Activated CD8-positive, alpha-beta T cell treated with anti-CD3 and anti-CD28 coated beads for 36 hours (primary cell): ENCODE measurements at regions of chr4 and their contacts with region 1.

Region 1: GRCh38 chr4:1746265-1746691 is 25.0 kb downstream of the TACC3 start:
- DNase-seq: peak; percentile 92
- ATAC-seq: peak; percentile 78
- H3K4me3 Mint-ChIP-seq: no peak overlapping the region
- H3K27ac Mint-ChIP-seq: no peak overlapping the region
- H3K4me1 Mint-ChIP-seq: no peaks in the 10 kb centered on the region
- H3K27me3 Mint-ChIP-seq: peaks cover 4% of the 10 kb centered on the region
- CTCF ChIP-seq: peak; percentile 84

Region 2: DNA sequence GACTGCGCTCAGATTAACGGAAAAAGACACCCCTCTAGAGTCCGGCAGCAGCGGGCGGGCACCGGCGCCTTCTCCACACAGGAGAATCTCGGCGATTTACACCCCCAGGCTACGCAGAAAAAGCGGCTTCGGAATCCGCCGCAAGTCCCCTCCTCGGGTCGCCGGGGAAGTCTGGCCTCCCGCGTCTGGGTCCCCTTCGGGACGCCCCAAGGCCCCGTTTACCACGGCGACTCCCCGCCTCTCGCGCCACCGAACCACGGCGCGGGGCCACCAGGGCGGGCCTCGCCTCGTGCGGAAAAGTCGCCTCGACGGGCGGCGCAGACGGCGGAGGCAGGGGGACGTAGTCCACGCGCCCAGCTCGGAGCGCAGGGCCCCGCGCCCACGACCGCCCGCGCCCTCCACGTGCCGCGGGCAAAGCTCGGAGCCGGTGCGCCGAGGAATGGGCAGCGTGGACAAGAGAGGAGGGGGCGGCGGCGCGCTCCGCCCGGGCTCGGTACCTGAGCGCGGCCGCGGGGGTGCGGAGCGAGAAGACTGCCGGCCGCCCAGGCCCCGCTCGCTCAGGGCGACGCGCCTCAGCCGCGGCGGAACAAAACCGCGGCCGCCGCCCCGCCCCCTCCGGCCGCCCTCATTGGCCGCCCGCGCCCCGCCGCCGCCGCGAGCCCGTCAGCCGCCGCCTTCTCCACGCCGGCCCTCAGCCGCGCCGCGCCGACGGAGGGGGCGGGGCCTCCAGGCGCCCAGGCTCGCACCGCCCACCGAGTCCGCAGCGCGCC is 62.4 kb before region 1 on chr4 and contains the start of gene FAM53A:
- CTCF ChIA-PET with region 1: no interaction called
- POLR2A ChIA-PET with region 1: no interaction called
- intact Hi-C with region 1: no loop called
- DNase-seq: peak; percentile 42
- ATAC-seq: peak; percentile 96
- H3K4me3 Mint-ChIP-seq: peak within 1 kb of the TSS; percentile 76
- H3K27ac Mint-ChIP-seq: peak within 1 kb of the TSS; percentile 69
- H3K4me1 Mint-ChIP-seq: peaks cover 11% of the 10 kb centered on the region
- H3K27me3 Mint-ChIP-seq: no peaks in the 10 kb centered on the region
- CTCF ChIP-seq: no peak
- total RNA-seq, gene FAM53A: 1.2 to 1.8 TPM

Region 3: DNA sequence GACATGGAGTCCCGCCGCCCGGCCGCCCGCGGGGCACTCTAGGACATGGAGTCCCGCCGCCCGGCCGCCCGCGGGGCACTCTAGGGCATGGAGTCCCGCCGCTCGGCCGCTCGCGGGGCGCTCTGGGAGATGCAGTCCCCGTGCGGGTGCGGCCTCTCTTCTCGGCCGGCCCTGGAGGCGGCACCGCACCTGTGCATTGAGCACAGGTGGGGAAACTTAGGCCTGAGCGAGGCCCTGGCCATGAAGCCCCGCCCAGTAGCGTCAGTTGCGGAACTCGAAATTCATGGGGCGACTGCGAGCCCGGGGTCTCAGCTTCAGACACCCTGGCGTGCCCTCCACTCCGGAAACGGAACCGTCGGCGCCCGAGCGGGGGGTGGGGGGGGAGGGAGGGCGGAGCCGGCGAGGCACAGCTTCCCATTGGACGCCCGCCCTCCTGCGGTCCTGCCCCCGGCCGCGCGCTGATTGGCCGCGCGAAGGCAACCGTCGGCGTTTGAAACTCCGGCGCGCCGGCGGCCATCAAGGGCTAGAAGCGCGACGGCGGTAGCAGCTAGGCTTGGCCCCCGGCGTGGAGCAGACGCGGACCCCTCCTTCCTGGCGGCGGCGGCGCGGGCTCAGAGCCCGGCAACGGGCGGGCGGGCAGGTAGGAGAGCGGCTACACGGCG is 25.1 kb before region 1 on chr4 and contains the starts of genes TACC3 and TMEM129:
- CTCF ChIA-PET with region 1: interaction called, 11 read pairs
- POLR2A ChIA-PET with region 1: interaction called, 4 read pairs
- intact Hi-C with region 1: no loop called
- DNase-seq: peak; percentile 96
- ATAC-seq: peak; percentile 81
- H3K4me3 Mint-ChIP-seq: peak within 1 kb of the TSS; percentile 97
- H3K27ac Mint-ChIP-seq: peak within 1 kb of the TSS; percentile 99
- H3K4me1 Mint-ChIP-seq: peaks cover 40% of the 10 kb centered on the region
- H3K27me3 Mint-ChIP-seq: no peaks in the 10 kb centered on the region
- CTCF ChIP-seq: no peak
- total RNA-seq, gene TACC3: 190 to 200 TPM
- total RNA-seq, gene TMEM129: 17.8 to 18.2 TPM

Region 4: DNA sequence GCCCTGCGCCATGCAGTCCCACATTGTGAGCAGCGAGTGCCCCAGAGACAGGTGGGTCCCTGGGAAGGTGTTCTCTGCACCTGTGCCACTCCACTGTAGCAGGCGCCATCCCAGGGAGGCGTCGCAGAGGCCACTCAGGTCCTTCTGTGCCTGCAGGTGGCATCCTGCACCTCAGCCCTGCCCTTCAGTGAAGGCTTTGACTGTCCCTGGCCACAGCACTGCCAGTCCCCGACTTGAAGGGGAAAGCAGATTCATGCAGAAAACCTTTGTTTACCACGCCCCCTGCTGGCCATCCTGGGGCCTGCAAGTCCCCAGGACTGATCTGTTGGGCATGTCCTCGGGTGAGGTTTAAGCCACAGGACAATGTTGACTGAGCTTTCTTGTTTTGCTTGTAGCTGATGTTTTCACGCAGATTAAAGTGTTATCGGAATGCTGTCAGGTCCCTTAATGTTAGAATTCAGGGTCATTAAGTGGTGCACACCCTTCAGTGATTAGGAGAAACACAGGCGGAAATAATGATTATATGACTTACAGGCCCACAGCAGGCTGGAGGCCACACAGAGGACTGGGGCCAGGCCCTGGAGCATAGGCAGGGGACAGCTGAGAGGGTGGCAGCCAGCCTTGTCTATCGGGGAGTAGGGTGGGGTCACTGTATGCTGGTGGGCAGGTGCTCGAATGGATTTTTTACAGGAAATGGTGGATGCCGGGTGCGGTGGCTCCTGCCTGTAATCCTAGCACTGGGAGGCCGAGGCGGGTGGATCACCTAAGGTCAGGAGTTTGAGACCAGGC is 19.9 kb before region 1 on chr4:
- CTCF ChIA-PET with region 1: interaction called, 12 read pairs
- POLR2A ChIA-PET with region 1: interaction called, 4 read pairs
- intact Hi-C with region 1: no loop called
- DNase-seq: peak; percentile 95
- ATAC-seq: peak; percentile 29
- H3K4me3 Mint-ChIP-seq: no peak overlapping the region
- H3K27ac Mint-ChIP-seq: peak overlapping the region; percentile 73
- H3K4me1 Mint-ChIP-seq: peaks cover 58% of the 10 kb centered on the region
- H3K27me3 Mint-ChIP-seq: no peaks in the 10 kb centered on the region
- CTCF ChIP-seq: peak; percentile 95

Region 5: DNA sequence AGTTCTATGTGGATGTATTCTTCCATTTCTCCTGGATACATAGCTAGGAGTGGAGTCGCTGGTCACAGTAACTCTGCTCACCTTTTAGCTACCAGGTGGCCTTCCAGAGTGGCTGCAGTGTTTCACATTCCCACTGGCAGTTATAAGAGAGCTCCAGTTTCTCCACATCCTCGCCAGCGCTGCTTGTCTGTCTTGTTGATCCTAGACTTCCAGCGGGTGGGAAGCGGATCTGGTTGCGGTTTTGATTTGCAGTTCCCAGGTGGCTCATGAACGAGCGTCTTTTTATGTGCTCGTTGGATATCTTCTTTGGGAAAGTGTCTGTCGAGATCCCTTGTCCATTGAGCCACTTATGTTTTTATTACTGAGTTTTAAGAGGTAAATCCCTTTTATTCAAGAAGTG is 13.4 kb before region 1 on chr4:
- CTCF ChIA-PET with region 1: interaction called, 12 read pairs
- POLR2A ChIA-PET with region 1: interaction called, 6 read pairs
- intact Hi-C with region 1: no loop called
- DNase-seq: no peak
- ATAC-seq: no peak
- H3K4me3 Mint-ChIP-seq: no peak overlapping the region
- H3K27ac Mint-ChIP-seq: no peak overlapping the region
- H3K4me1 Mint-ChIP-seq: peaks cover 20% of the 10 kb centered on the region
- H3K27me3 Mint-ChIP-seq: no peaks in the 10 kb centered on the region
- CTCF ChIP-seq: no peak